Uterus (tissue), 4 donors: ENCODE measurements at regions of chr22 and their contacts with region 1.

Region 1: DNA sequence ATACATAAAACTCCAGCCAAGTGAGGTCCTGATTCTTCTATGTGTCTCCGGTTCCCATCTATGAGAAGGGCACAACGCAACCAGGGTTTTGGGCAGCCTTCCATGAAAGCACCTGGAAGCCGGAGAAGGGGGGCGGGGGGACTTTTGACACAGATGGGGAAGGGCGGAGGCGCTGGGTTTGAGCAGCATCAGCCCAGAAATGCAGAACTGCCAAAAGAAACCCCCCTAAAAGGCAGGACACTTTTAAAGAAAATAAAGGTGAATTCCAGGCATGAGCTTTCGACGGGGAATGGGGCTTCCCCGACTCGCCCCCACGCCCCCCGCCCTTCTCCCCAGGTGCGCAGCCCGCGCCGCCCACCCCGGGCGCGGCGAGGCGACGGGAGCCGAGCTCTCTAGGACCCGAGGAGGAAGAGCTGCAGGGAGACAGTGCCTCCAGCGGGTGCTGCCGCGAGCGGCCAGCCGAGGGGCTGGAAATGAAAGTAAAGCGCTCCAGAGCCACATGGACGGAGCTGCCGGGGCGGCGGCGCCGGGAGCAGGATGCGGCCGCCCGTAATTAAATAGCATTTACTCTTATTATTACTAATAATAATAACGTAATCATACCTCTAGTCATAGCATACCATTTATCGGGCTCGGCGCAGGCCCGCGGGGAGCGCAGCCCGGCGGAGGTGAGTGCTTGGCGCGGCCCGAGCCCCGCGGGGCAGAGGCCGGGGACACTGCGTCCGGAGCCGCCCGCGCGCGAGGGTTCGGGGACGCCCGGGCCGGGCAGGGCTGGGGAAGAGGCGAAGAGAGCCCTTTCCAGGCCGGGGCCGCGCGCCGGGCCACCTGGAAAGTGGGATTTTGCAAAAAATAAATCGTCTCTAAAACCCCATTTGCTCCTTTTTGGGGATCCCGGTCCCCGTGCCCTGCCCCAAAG is at the start of gene ZC3H7B:
- DNase-seq: peak; percentile 74 to 80
- H3K4me3 ChIP-seq: peak within 1 kb of the TSS; percentile 63 to 67
- H3K27ac ChIP-seq: peak within 1 kb of the TSS; percentile 87 to 92
- H3K4me1 ChIP-seq: no peaks in the 10 kb centered on the region
- H3K27me3 ChIP-seq: no peaks in the 10 kb centered on the region
- CTCF ChIP-seq: peak; percentile 42 to 80 (median 56)
- POLR2A ChIP-seq: peak in 1 of 2 donors; percentile 45
- total RNA-seq, gene ZC3H7B: 14.1 to 74.1 (median 28.2) TPM

Region 2: GRCh38 chr22:41369837-41370236 is 68.5 kb after region 1 on chr22:
- intact Hi-C with region 1: loop called (anchors 10 kb)
- DNase-seq: no peak
- H3K4me3 ChIP-seq: no peak overlapping the region
- H3K27ac ChIP-seq: peak overlapping the region; percentile 65 to 79
- H3K4me1 ChIP-seq: peaks cover 4 to 19% of the 10 kb centered on the region in 2 donors
- H3K27me3 ChIP-seq: no peaks in the 10 kb centered on the region
- CTCF ChIP-seq: no peak
- POLR2A ChIP-seq: no peak

Region 3: DNA sequence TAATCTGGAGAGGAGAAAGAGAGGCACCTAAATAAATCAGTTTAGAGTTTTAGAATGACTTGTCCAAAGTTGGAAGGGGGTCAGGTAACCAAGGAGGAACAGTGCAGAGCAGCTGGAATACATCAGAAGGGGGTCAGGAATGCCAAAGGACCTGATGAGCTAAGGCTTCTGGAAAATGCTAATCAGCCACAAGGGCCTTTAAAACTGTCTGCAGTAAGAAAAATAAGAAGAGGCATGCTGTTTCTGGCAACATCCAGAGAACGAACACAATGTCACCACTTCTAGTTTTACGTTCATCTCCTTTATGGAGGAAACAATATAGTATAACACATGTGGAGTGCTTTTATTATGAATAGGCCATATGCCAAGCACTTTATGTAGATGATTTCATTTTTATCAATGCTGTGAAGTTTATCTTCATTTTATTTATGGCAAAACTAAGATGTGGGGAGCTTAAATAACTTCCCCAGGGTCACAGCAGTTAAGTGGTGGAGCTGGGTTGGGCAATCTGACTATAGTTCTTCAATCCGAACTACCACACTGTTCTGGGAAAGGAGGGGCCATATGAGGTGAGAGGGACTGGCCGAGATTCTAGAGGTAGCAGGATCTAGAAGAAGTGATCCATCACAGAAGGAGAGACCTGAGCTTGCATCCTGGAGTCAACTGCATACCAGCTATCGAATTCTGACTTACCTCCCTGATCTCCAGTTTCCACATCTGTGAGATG is 190.2 kb after region 1 on chr22:
- intact Hi-C with region 1: no loop called
- DNase-seq: peak; percentile 66 to 81
- H3K4me3 ChIP-seq: no peak overlapping the region
- H3K27ac ChIP-seq: peak overlapping the region; percentile 75 to 87
- H3K4me1 ChIP-seq: peaks cover 4 to 12% of the 10 kb centered on the region in 2 donors
- H3K27me3 ChIP-seq: no peaks in the 10 kb centered on the region
- CTCF ChIP-seq: no peak
- POLR2A ChIP-seq: no peak